Left ventricle myocardium inferior (tissue), 1 donor: ENCODE measurements at regions of chr9 and their contacts with region 1.

Region 1: GRCh38 chr9:13427587-13427986 is 148.1 kb upstream of the MPDZ start:
- DNase-seq: no peak
- H3K4me3 ChIP-seq: peak overlapping the region; percentile 24
- H3K27ac ChIP-seq: peak overlapping the region; percentile 65
- H3K4me1 ChIP-seq: peaks cover 33% of the 10 kb centered on the region
- H3K27me3 ChIP-seq: no peaks in the 10 kb centered on the region
- CTCF ChIP-seq: peak; percentile 83

Region 2: GRCh38 chr9:14027116-14027800 is 599.7 kb after region 1 on chr9:
- intact Hi-C with region 1: loop called (anchors 10 kb)
- DNase-seq: peak; percentile 67
- H3K4me3 ChIP-seq: no peak overlapping the region
- H3K27ac ChIP-seq: peak overlapping the region; percentile 86
- H3K4me1 ChIP-seq: peaks cover 60% of the 10 kb centered on the region
- H3K27me3 ChIP-seq: no peaks in the 10 kb centered on the region
- CTCF ChIP-seq: no peak

Region 3: DNA sequence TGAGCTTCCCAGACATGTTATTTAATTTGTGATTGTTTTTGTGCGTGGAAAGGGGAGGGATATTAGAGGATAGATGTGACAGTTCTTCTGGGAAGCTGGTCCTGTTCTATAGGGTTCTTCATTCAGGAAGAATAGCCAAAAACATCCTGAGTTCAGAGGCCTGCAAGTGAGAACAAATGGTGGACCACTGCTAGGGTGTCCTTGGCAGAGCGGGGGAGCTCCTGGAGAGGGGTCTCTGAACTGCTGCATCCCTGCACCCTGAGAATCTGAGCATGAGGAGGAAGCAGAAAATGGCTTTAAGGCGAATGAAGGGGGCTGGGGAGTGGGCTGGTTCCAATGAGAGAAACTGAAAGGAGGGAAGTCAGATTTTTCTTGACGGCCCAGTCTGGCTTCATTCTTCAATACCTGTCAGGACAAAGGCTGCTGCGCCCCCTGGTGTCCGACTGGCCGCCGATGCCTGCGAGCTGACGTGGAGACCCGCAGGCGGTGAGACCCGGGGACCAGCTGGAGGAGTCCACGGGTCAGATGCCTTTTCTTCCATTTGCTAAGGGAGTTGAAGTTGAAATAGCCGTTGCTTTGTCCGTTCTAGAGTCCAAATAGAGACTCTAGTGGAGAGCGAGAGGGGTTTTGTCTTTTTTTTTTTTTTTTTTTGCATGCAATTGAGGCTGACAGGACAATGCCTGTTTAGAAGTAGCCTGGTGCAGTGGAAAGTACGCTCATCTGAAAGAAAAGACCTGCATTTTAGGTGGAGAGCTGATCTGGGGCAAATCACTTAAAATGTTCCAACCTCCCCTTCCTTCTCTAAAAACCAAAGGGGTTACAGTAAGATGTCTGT is 925.9 kb after region 1 on chr9:
- intact Hi-C with region 1: loop called (anchors 10 kb)
- DNase-seq: peak; percentile 96
- H3K4me3 ChIP-seq: peak overlapping the region; percentile 48
- H3K27ac ChIP-seq: peak overlapping the region; percentile 96
- H3K4me1 ChIP-seq: peaks cover 77% of the 10 kb centered on the region
- H3K27me3 ChIP-seq: no peaks in the 10 kb centered on the region
- CTCF ChIP-seq: peak; percentile 94